T-cell (primary cell): ENCODE measurements at regions of chr1 and their contacts with region 1.

Region 1: GRCh38 chr1:40691538-40692428 is at the start of gene NFYC:
- DNase-seq: peak; percentile 84 to 99 (median 93)
- ATAC-seq: peak; percentile 86 to 88 (median 86)
- H3K4me3 ChIP-seq: peak within 1 kb of the TSS; percentile 81 to 100
- H3K4me3 Mint-ChIP-seq: peak within 1 kb of the TSS; percentile 87 to 98 (median 95)
- H3K27ac ChIP-seq: peak within 1 kb of the TSS; percentile 100
- H3K27ac Mint-ChIP-seq: peak within 1 kb of the TSS; percentile 94 to 96
- H3K4me1 ChIP-seq: peaks cover 21 to 32% of the 10 kb centered on the region in 2 experiments
- H3K4me1 Mint-ChIP-seq: peaks cover 65 to 71% (median 69%) of the 10 kb centered on the region in 3 donors
- H3K27me3 ChIP-seq: no peaks in the 10 kb centered on the region
- H3K27me3 Mint-ChIP-seq: no peaks in the 10 kb centered on the region
- total RNA-seq, gene NFYC: 50.1 to 60.4 (median 52.9) TPM

Region 2: GRCh38 chr1:40668769-40669525 is 22.8 kb before region 1 on chr1:
- CTCF ChIA-PET with region 1: interaction called, 3 to 13 read pairs
- POLR2A ChIA-PET with region 1: no interaction called
- DNase-seq: peak; percentile 50 to 91 (median 76)
- ATAC-seq: peak; percentile 54 to 71 (median 60)
- H3K4me3 ChIP-seq: peak overlapping the region in 1 of 2 donors; percentile 32
- H3K4me3 Mint-ChIP-seq: peak overlapping the region; percentile 21 to 63 (median 39)
- H3K27ac ChIP-seq: no peak overlapping the region
- H3K27ac Mint-ChIP-seq: peak overlapping the region in 1 of 2 donors; percentile 8
- H3K4me1 ChIP-seq: peaks cover 4 to 25% of the 10 kb centered on the region in 2 experiments
- H3K4me1 Mint-ChIP-seq: peaks cover 14 to 18% (median 17%) of the 10 kb centered on the region in 3 donors
- H3K27me3 ChIP-seq: peaks cover 0 to 2% of the 10 kb centered on the region in 2 experiments
- H3K27me3 Mint-ChIP-seq: no peaks in the 10 kb centered on the region

Region 3: DNA sequence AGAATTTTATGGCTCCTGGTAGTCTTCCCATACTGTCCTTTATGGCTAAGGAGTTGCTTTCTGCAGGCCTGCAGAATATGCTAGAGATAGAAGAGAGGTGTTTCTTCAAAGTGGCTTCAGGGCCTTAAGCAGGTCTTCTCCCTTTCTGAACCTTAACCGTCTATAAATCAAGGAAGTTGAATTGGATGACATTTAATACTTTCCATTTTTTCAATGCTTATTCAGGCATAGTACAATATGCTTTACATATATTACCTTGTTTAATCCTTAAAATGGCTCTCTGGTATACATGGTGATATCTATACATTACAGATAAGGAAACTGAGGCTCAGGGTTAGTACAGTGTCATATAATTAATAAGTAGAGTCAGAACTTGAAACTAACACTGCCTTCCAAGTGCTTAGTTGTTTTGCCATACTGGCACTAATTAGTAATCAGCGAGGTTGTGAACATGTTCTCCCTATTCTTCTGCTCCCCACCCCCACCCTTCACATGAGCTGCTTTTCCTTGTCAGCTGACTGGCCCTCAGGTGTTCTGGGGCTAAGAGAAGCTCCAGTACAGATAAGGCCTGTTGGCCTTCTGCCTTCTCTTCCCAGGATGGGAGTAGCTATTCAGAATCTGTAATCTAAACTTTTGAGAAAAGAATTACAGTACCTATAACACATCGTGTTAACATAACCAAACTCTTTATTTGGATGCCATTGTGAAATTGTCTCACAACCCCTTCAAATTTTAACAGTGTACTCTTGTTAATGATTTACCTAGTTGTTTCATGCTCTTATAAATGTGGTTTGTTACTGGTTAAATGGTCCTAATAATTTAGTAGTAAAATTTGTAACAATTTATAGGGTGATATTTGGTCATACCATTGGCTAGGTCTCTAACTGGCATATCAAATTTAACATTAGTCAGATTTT is 13.3 kb after region 1 on chr1:
- CTCF ChIA-PET with region 1: interaction called in 1 of 2 experiments, 10 read pairs
- POLR2A ChIA-PET with region 1: interaction called, 6 to 7 read pairs
- DNase-seq: no peak
- ATAC-seq: no peak
- H3K4me3 ChIP-seq: no peak overlapping the region
- H3K4me3 Mint-ChIP-seq: no peak overlapping the region
- H3K27ac ChIP-seq: no peak overlapping the region
- H3K27ac Mint-ChIP-seq: no peak overlapping the region
- H3K4me1 ChIP-seq: peaks cover 12 to 20% of the 10 kb centered on the region in 2 experiments
- H3K4me1 Mint-ChIP-seq: peaks cover 54 to 63% (median 59%) of the 10 kb centered on the region in 3 donors
- H3K27me3 ChIP-seq: no peaks in the 10 kb centered on the region
- H3K27me3 Mint-ChIP-seq: no peaks in the 10 kb centered on the region